Activated CD4-positive, alpha-beta T cell treated with anti-CD3 and anti-CD28 coated beads, Interleukin-2, amount 10 ng/mL, durations not matched to agents 7 days and 5 days (primary cell): ENCODE measurements at regions of chr1 and their contacts with region 1.

Region 1: GRCh38 chr1:211596418-211597181 is 17.6 kb upstream of the SLC30A1 start:
- DNase-seq: no peak
- H3K4me3 Mint-ChIP-seq: no peak overlapping the region
- H3K27ac Mint-ChIP-seq: no peak overlapping the region
- H3K4me1 Mint-ChIP-seq: peaks cover 13% of the 10 kb centered on the region
- H3K27me3 Mint-ChIP-seq: peaks cover 10% of the 10 kb centered on the region

Region 2: DNA sequence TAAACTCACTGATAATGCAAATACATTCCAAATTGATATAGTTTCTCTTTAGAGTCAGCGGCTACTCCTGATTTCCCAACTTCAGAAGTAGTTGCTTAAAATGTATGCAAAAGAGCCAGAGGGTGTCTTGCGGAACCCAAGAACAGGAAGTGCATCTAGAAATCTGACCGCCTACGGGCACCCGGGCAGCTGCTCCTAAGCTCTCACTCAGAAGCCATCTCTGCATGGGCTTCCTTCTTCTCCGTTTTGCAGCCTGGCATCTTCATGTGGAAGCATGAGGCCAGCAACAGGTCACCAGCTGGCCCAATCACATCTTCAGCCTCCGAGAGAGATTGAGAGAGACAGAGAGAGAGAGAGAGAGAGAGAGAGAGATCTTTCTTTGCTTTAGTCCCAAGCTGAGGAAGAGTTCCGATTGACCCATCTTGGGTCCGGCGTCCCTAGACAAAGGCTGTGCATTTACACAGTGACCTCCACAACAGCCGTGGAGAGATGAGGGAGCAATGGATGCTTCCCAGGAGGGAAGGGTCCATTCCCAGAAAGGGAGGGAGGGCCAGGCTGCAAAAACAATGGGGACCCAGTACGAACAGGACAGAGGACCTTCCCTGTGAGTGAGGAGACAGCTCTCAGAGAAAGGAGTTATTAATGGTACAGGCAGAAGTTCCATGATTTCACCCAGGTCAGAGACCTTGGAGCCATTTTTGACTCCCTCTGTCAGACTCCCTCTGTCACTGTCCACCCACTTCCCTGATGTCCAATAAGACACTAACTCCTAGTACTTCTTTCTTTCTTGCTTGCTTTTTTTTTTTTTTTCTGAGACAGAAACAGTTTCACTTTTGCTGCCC is 10.5 kb after region 1 on chr1:
- CTCF ChIA-PET with region 1: interaction called, 11 read pairs
- POLR2A ChIA-PET with region 1: no interaction called
- DNase-seq: peak; percentile 24
- H3K4me3 Mint-ChIP-seq: peak overlapping the region; percentile 62
- H3K27ac Mint-ChIP-seq: peak overlapping the region; percentile 91
- H3K4me1 Mint-ChIP-seq: peaks cover 24% of the 10 kb centered on the region
- H3K27me3 Mint-ChIP-seq: no peaks in the 10 kb centered on the region